Activated CD4-positive, alpha-beta T cell treated with anti-CD3 and anti-CD28 coated beads for 36 hours (primary cell): ENCODE measurements at regions of chr14 and their contacts with region 1.

Region 1: GRCh38 chr14:80587075-80587724 is 354.3 kb downstream of the CEP128 start:
- DNase-seq: peak; percentile 18
- ATAC-seq: peak; percentile 92
- H3K4me3 Mint-ChIP-seq: no peak overlapping the region
- H3K27ac Mint-ChIP-seq: peak overlapping the region; percentile 47
- H3K4me1 Mint-ChIP-seq: peaks cover 20% of the 10 kb centered on the region
- H3K27me3 Mint-ChIP-seq: no peaks in the 10 kb centered on the region

Region 2: DNA sequence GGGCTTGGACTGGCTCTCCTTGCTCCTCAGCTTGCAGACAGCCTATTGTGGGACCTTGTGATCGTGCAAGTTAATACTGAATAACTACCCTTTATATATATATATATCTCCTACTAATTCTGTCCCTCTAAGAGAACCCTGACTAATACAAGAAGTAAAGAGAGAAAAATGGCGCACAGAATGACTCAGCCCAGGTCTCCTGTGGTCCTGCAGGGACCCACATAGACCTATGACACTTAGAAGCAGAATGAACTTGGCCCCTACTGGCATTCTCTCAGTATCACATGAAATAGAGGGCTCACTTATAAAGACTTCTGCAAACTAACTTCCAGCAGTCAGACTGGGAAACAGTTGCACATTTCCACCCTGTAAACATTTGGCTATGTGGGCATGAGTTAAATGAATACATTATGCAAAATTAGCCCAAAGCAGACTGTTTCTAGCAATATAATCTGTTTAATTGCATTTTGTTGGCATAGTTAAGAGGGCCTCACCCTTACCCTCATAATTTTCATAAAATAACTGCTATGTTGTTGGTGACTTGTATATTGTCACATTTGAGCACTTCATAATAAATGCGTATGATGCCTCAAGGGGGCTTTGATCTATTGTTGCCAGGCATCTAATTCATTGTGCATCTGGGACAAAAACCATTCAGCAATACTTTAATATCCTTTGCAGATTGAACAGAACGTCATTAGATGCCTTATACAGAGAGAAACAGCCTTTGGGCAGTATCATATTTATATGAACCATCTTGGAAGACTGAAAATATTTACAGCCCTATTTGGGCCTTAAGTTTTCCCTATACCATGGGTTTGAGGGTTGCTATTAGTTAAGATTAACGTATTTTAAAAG is 26.2 kb before region 1 on chr14:
- CTCF ChIA-PET with region 1: no interaction called
- POLR2A ChIA-PET with region 1: no interaction called
- intact Hi-C with region 1: no loop called
- DNase-seq: no peak
- ATAC-seq: peak; percentile 33
- H3K4me3 Mint-ChIP-seq: no peak overlapping the region
- H3K27ac Mint-ChIP-seq: no peak overlapping the region
- H3K4me1 Mint-ChIP-seq: no peaks in the 10 kb centered on the region
- H3K27me3 Mint-ChIP-seq: no peaks in the 10 kb centered on the region

Region 3: GRCh38 chr14:80809663-80810062 is 222.5 kb after region 1 on chr14:
- CTCF ChIA-PET with region 1: no interaction called
- POLR2A ChIA-PET with region 1: no interaction called
- intact Hi-C with region 1: no loop called
- DNase-seq: no peak
- ATAC-seq: no peak
- H3K4me3 Mint-ChIP-seq: no peak overlapping the region
- H3K27ac Mint-ChIP-seq: no peak overlapping the region
- H3K4me1 Mint-ChIP-seq: no peaks in the 10 kb centered on the region
- H3K27me3 Mint-ChIP-seq: no peaks in the 10 kb centered on the region

Region 4: DNA sequence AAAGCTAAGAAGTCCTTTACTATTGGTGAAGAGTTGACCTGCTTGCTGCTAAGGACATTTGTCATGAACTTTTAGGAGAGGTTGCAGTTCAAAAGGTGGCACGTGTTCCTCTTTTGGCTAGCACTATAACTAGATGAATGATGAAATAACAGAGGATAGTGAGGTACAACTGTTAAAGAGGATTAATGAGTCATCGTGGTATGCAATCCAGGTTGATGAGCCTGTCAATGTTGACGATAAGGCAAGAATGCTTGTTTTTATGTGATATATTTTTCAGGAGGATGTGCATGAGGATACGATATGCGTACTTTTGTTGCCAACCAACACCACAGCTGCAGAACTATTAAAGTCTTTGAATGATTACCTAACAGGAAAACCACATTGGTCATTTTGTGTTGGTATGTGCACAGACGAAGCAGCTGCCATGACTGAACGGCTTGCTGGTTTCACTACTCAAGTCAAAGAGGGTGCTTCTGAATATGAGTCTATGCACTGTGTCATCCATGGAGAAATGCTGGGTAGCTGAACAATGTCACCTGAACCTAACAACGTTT is 343.7 kb after region 1 on chr14:
- CTCF ChIA-PET with region 1: interaction called, 3 read pairs
- POLR2A ChIA-PET with region 1: no interaction called
- intact Hi-C with region 1: loop called in 1 of 2 experiments (anchors 1 kb)
- DNase-seq: peak; percentile 73
- ATAC-seq: peak; percentile 99
- H3K4me3 Mint-ChIP-seq: peak overlapping the region; percentile 50
- H3K27ac Mint-ChIP-seq: peak overlapping the region; percentile 85
- H3K4me1 Mint-ChIP-seq: peaks cover 33% of the 10 kb centered on the region
- H3K27me3 Mint-ChIP-seq: no peaks in the 10 kb centered on the region

Region 5: DNA sequence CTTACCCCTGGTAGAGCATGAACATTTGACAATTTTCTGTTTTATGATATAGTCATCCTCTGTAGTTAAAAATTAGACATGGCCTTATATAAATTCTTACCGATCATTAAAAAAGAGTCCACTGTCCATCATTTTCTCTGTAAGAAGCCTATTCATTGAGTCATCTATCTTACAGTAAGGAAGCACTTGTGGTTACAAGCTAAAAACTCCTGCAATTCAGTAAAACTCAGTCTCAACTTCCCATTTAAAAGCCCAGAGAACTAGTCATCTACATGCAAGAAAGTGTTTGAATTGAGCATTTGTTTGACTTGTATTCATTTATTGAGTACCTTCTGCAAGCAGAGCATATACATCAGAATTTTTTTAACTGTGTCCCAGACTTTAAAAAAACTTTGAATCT is 570.2 kb after region 1 on chr14:
- CTCF ChIA-PET with region 1: no interaction called
- POLR2A ChIA-PET with region 1: no interaction called
- intact Hi-C with region 1: loop called in 1 of 2 experiments (anchors 5 kb)
- DNase-seq: no peak
- ATAC-seq: no peak
- H3K4me3 Mint-ChIP-seq: no peak overlapping the region
- H3K27ac Mint-ChIP-seq: no peak overlapping the region
- H3K4me1 Mint-ChIP-seq: peaks cover 12% of the 10 kb centered on the region
- H3K27me3 Mint-ChIP-seq: peaks cover 5% of the 10 kb centered on the region